BJ (cell line): ENCODE measurements at regions of chr5 and their contacts with region 1.

Region 1: GRCh38 chr5:119336845-119337580 is 18.8 kb upstream of the TNFAIP8 start:
- DNase-seq: no peak
- H3K4me3 ChIP-seq: no peak overlapping the region
- H3K27me3 ChIP-seq: no peaks in the 10 kb centered on the region
- CTCF ChIP-seq: no peak

Region 2: DNA sequence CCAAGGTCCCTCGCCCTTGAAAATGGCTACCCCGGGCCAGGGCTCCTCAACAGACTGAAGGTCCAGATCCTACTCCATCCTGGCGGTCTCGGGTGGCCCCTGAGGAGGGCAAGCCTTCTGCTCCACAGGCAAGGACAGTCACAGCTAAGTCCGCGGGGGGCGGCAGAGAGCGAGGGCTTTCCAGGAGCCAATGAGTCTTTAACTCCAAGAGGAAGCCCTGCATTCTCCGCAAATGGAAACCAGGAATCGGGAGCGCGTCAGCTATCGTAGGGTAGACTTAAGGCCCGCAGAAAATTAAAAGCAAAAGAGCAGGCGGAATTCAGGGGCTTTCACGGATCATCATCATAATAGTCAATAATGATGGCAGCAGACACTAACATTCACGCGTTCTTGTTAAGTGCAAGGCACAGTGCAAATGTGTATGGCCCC is 69.0 kb before region 1 on chr5:
- CTCF ChIA-PET with region 1: interaction called, 12 read pairs
- POLR2A ChIA-PET with region 1: no interaction called
- DNase-seq: peak; percentile 73
- H3K4me3 ChIP-seq: peak overlapping the region; percentile 75
- H3K27me3 ChIP-seq: no peaks in the 10 kb centered on the region; the same call in 1 of the 2 replicates
- CTCF ChIP-seq: peak; percentile 86

Region 3: DNA sequence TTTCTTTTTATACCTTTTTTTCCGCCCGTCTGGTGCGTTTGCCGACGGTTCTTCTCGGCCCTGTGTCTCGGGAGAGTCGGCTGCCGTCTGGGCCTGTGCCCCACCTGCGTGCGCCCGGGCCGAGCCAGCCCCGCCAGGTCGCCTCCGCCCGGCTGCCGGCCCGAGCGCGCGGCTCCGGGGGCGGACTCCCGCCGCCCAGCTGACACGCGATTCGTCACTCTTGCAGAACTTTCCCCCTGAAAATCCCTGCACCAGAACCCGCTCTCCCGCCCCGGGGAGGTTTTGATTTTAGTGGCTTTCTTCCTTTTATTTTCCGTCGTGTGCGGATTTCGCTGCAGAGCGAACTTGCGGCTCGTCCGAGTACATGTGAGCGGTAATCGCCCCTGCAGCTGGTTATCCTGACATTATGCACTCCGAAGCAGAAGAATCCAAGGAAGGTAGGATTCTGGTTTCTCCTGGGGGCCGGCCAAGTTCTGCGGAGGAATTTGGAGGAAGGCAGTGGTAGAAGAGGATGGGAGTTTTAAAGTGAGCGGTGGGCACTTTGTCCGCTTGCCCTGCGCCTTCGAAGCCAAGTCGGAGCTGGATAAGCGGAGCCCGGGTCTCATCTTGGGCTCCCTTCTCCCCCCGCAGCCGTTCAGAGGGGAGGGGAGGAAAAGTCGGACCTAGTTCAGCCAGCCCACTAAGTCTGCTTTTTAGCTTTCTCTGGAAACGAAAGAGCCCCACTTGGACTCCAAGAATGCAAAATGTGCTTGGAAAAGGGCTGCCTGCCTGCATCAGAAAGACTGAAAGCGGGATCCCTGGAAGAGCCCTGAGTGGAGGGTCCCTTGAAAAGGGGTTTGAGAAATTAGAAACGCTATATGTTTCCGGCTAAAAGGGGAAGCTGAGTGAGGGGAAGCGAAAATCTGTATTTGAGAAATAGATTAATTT is 18.9 kb after region 1 on chr5 and contains the start of gene TNFAIP8:
- CTCF ChIA-PET with region 1: interaction called, 16 read pairs
- POLR2A ChIA-PET with region 1: no interaction called
- DNase-seq: no peak
- H3K4me3 ChIP-seq: peak within 1 kb of the TSS; percentile 57
- H3K27me3 ChIP-seq: no peaks in the 10 kb centered on the region
- CTCF ChIP-seq: no peak
- polyA plus RNA-seq, gene TNFAIP8: 11.3 and 17.0 TPM in 2 replicates